ENCODE measurements at regions of chr3 and their contacts with region 1.

Region 1: GRCh38 chr3:186342197-186342596 is 19.8 kb downstream of the DGKG start:
- H3K4me3 Mint-ChIP-seq: peak overlapping the region; percentile 6
- H3K27ac Mint-ChIP-seq: no peak overlapping the region
- H3K4me1 Mint-ChIP-seq: peaks cover 34% of the 10 kb centered on the region
- H3K27me3 Mint-ChIP-seq: peaks cover 11% of the 10 kb centered on the region

Region 2: GRCh38 chr3:186239321-186239720 is 102.9 kb before region 1 on chr3:
- intact Hi-C with region 1: no loop called
- H3K4me3 Mint-ChIP-seq: no peak overlapping the region
- H3K27ac Mint-ChIP-seq: no peak overlapping the region
- H3K4me1 Mint-ChIP-seq: peaks cover 15% of the 10 kb centered on the region
- H3K27me3 Mint-ChIP-seq: no peaks in the 10 kb centered on the region

Region 3: DNA sequence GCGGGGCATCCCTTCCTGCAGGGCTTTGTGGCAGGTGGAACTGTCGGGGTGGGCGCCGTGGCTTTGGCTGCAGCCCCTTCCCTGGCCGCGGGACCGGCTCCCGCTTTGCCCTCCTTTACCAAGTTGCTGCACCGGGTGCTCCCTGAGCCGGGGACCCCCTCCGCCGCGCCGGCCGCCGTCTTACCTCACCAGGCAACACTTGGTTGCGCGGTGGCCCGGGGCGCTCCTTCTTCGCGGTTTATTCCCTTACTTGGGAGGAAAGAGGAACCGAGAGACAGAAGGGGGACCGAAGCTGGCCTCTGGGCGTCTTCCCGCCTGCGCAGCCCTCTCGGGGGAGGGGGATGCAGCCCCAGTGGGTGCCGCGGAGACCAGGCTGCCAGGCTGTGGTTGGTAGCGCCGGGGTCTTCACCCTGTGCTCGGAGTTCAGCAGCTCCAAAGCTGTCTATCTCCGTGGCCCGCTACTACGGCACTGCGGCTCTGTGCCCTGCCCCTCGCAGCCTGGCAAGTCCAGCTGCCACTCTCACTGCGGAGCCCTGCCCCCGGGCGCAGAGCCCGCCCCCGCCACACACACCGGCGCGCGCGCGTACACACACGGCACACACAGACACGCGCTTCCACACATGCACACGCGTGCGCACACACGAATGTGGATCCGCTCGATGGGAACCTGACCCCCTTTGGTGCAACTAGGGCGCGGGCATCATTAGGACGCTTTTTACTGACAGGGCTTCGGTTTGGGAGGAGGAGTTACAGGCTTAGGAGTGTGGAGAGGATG is 19.8 kb after region 1 on chr3 and contains the start of gene DGKG:
- intact Hi-C with region 1: loop called (anchors 1 kb)
- H3K4me3 Mint-ChIP-seq: peak within 1 kb of the TSS; percentile 87
- H3K27ac Mint-ChIP-seq: peak within 1 kb of the TSS; percentile 48
- H3K4me1 Mint-ChIP-seq: peaks cover 79% of the 10 kb centered on the region
- H3K27me3 Mint-ChIP-seq: peaks cover 27% of the 10 kb centered on the region

Region 4: DNA sequence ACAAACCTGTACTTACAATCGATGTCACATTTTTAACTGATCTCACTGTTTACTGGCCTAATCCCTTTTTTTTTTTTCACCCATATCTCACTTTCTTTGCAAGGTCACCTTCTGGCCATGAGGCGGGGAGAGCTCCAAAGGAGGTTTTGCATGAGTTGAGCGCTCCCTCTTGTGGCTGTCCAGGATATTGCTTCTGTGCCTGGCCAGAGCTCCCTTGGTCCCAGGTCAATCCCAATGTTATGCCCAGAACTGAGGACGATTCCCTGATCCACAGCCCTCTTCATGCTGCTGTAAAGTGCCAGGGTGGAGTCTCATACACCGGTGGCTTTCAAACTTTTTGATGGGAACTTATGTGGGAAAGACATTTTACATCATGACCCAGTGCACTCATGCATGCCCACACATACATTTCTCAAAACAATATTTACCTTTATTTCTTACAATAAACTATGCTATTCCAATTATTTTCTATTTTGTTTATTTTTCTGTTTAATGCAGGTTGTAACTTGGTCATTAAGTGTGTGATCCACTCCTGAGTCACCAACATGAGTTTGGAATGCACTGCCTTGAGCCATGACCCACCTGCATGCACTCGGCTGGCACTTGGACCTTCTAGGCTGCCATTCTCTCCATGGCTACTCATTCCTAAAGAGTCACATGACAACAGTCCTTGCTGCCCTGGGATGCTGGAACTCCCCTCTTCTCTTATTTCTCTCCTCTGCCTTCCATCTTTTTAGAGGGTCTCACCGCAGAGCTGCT is 1337.6 kb after region 1 on chr3:
- intact Hi-C with region 1: no loop called
- H3K4me3 Mint-ChIP-seq: no peak overlapping the region
- H3K27ac Mint-ChIP-seq: no peak overlapping the region
- H3K4me1 Mint-ChIP-seq: peaks cover 5% of the 10 kb centered on the region
- H3K27me3 Mint-ChIP-seq: peaks cover 23% of the 10 kb centered on the region

Measured in dendritic cell treated with granulocyte-macrophage colony-stimulating factor and Interleukin-4, amounts not matched to agents 40 ng/mL and 50 ng/mL, for 4 days (primary cell).